HEK293 (cell line): ENCODE measurements at regions of chr9 and their contacts with region 1.

Region 1: DNA sequence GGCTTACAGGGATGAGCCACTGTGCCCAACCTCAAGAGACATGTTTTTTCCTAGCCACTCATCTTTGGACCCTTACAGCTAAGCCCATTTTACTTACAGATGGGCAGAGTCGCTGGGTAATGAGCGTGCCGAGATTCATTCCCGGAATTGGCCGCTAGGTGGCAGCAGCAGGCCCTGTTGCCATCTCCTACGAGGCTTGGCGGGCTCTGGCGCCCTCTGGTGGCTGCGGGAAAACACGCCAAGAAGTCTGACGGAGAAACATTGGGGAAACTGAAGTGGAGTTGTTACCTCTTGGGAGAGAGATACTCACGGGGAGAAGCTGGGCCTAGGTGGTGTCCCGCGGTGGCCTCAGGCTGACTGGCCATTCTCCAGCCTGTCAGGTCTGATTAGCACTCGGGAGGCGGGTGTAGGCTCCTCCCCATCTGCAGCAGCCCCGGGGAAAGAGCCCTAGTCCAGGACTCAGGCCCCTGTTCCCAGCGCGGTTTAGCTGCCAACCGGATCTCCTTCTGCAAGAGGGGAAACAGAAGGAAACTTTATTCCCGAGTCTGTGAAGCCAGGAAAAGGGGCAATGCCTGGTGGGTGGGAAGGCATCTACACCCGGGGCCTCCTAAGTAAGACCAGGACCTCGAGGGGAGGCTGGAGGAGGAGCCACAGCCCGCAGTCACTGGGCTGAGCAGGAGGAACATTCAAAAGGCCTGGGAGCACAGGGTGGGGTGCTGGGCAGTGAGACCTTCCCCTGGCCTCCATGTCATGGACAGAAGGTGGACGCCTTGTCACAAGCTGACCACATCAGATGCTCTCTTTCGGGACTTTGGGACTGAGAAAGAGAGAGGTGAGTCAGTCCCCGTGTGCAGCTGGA is 9.7 kb downstream of the PTGES2 start:
- H3K4me3 ChIP-seq: no peak overlapping the region
- H3K27ac ChIP-seq: no peak overlapping the region
- H3K4me1 ChIP-seq: no peaks in the 10 kb centered on the region
- CTCF ChIP-seq: peak; percentile 97

Region 2: GRCh38 chr9:127734747-127735529 is 382.9 kb before region 1 on chr9 and contains the start of gene TOR2A:
- CTCF ChIA-PET with region 1: no interaction called
- POLR2A ChIA-PET with region 1: no interaction called
- H3K4me3 ChIP-seq: peak within 1 kb of the TSS; percentile 70
- H3K27ac ChIP-seq: peak within 1 kb of the TSS; percentile 75
- H3K4me1 ChIP-seq: no peaks in the 10 kb centered on the region
- CTCF ChIP-seq: peak; percentile 93

Region 3: DNA sequence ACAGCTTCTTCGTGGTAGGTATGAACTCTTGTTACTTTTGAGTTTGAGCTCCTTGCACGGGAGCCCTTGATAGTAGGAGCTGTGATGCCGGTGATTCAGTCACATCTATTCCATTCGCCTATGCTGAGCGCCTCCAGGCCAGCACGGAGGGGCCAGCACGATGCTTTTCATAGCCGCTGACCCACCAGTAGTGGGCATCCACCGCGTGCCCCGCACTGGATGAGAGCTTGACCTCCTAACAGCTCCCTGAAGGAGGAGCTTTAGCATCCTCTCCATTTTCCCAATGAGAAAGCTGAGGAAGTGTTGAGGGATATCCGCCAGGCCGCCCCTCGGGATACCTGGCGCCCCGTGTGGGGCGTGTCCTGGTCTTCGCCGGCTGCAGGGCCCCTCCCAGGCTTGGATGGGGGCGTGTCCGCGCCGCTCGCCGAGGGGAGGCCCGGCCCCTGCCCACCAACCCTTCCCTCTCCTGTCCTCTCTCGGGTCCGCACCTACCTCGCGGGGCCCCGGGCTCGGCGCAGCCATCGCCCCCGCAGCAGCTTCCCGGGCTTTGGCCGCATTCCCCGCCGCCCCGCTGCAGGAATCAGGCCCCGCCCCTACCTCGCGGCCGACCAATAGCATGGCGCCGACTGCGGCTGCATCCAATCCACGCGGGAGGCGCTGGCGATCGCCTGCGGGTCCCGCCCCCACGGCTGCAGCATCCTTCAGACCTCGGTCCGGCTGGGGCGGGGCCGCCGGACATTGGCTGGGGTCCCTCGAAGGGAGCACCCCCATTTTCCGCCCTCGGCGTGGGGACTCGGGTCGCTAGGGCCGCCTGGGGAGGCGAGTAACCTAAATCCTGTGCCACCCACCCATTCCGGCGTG is 187.4 kb before region 1 on chr9 and contains the start of gene PIP5KL1:
- CTCF ChIA-PET with region 1: interaction called, 11 read pairs
- POLR2A ChIA-PET with region 1: no interaction called
- H3K4me3 ChIP-seq: peak within 1 kb of the TSS; percentile 55
- H3K27ac ChIP-seq: peak within 1 kb of the TSS; percentile 50
- H3K4me1 ChIP-seq: 0 out of 2 replicates have a peak, but pooled peaks cover 5% of the 10 kb centered on the region
- CTCF ChIP-seq: no peak

Region 4: GRCh38 chr9:127980706-127981558 is 136.9 kb before region 1 on chr9 and contains the start of gene EEIG1:
- CTCF ChIA-PET with region 1: interaction called, 11 read pairs
- POLR2A ChIA-PET with region 1: no interaction called
- H3K4me3 ChIP-seq: peak within 1 kb of the TSS; percentile 66
- H3K27ac ChIP-seq: peak within 1 kb of the TSS; percentile 81
- H3K4me1 ChIP-seq: peaks cover 6% of the 10 kb centered on the region; the same call in 1 of the 2 replicates
- CTCF ChIP-seq: no peak

Region 5: GRCh38 chr9:128034821-128035764 is 82.7 kb before region 1 on chr9:
- CTCF ChIA-PET with region 1: interaction called, 24 read pairs
- POLR2A ChIA-PET with region 1: no interaction called
- H3K4me3 ChIP-seq: no peak overlapping the region
- H3K27ac ChIP-seq: no peak overlapping the region
- H3K4me1 ChIP-seq: no peaks in the 10 kb centered on the region
- CTCF ChIP-seq: peak; percentile 51; the same call in 1 of the 2 replicates

Region 6: GRCh38 chr9:128081056-128081455 is 36.8 kb before region 1 on chr9:
- CTCF ChIA-PET with region 1: interaction called, 21 read pairs
- POLR2A ChIA-PET with region 1: no interaction called
- H3K4me3 ChIP-seq: no peak overlapping the region
- H3K27ac ChIP-seq: no peak overlapping the region
- H3K4me1 ChIP-seq: no peaks in the 10 kb centered on the region
- CTCF ChIP-seq: no peak

Region 7: GRCh38 chr9:128094166-128094967 is 23.5 kb before region 1 on chr9:
- CTCF ChIA-PET with region 1: interaction called, 42 read pairs
- POLR2A ChIA-PET with region 1: interaction called, 3 read pairs
- H3K4me3 ChIP-seq: no peak overlapping the region
- H3K27ac ChIP-seq: no peak overlapping the region
- H3K4me1 ChIP-seq: 0 out of 2 replicates have a peak, but pooled peaks cover 4% of the 10 kb centered on the region
- CTCF ChIP-seq: no peak

Region 8: DNA sequence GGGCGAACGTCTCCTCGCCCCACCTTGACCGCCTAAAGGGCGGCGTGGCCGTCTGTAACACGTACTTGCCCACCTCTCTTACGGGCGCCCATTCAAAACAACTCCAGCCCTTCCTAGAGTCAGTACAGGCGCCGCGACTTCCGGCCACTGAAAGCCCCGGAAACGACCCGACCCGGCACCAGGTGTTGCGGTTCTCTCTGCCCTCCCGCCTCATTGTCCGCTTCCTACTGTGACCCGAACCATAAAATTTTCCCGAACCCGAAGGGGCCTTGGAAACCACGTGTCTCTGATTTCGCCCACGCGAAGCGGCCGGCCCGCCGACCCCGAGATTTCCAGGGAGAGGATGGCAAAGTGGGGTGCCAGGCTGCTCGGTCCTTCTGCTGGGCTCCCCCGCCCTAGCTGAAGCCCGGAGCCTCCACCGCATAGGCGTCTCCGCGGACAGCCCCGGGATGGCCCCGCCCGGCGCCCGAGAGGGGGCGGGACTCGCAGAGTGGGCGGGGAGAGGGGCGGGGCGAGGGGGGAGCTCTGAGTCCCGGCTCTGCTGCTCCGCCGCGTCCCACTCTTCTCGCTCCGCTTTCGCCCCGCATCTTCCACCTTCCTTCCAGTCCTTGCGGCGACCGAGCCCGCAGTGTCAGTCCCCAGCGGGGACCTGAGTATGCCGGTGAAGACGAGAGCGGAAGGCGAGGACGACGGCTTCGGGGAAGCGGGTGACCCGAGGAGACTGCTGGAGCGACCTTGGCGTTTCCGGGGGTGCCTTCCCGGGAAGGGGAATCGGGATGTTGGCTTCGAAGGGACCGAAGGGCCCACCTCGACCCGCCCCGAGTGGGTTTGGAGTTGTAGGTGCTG is 10.4 kb after region 1 on chr9:
- CTCF ChIA-PET with region 1: interaction called, 29 read pairs
- POLR2A ChIA-PET with region 1: interaction called, 13 read pairs
- H3K4me3 ChIP-seq: peak overlapping the region; percentile 83
- H3K27ac ChIP-seq: peak overlapping the region; percentile 85
- H3K4me1 ChIP-seq: no peaks in the 10 kb centered on the region
- CTCF ChIP-seq: 0 out of 2 replicates have a peak, but pooled peaks have one; percentile 5

Region 9: GRCh38 chr9:128231638-128232527 is 114.0 kb after region 1 on chr9:
- CTCF ChIA-PET with region 1: no interaction called
- POLR2A ChIA-PET with region 1: no interaction called
- H3K4me3 ChIP-seq: no peak overlapping the region
- H3K27ac ChIP-seq: no peak overlapping the region
- H3K4me1 ChIP-seq: no peaks in the 10 kb centered on the region
- CTCF ChIP-seq: no peak